ENCODE measurements at regions of chr19 and their contacts with region 1.

Region 1: DNA sequence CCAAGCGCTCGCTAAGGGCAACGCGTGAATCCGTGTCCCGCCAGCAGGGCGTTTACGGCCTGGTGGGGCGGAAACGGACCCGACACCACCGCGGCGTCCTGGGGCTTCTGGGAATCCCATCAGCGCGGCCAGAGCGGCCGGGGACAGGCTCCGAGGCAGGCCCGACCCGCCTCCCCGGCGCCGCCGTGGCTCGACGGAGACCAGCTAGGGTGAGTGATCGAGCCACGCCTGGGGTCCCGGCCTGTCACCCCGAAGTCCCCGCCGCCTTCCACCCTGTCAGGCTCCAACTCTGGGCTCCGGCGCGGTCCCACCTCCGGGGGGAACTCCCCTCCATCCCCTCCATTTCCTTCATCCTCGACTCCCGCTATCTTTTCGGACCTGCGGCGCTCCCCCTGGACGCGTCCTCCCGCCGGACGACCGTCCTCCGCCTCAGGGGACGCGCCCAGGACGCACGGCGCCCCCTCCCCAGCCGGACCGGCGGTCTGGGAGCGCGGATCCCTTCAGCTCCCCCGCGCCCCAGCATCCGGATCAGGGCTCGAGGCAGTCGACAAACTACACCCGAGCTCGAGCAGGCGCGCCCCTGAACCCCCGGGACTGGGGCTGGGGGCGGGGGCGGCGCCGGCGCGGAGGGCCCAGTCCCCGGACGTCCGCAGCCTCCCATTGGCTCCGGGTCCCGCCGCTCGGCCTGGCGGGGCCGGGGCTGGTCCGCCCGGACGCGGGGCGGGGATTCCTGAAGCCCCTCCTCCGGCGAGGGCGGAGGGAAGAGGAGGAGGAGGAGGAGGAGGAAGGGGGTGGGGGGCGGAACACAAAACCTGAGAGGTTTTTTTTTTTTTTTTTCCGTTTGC is 638 bp upstream of the BICRA start:
- DNase-seq: peak; percentile 93 to 98 (median 95)
- ATAC-seq: peak; percentile 87
- H3K4me3 ChIP-seq: peak overlapping the region; percentile 84 to 99
- H3K4me3 Mint-ChIP-seq: peak overlapping the region; percentile 84
- H3K27ac ChIP-seq: peak overlapping the region; percentile 82 to 85
- H3K27ac Mint-ChIP-seq: peak overlapping the region; percentile 77
- H3K4me1 ChIP-seq: peaks cover 17% of the 10 kb centered on the region
- H3K4me1 Mint-ChIP-seq: peaks cover 29% of the 10 kb centered on the region
- H3K27me3 ChIP-seq: no peaks in the 10 kb centered on the region
- H3K27me3 Mint-ChIP-seq: no peaks in the 10 kb centered on the region
- CTCF ChIP-seq: no peak

Region 2: GRCh38 chr19:47483800-47484690 is 124.3 kb before region 1 on chr19 and contains the start of gene KPTN:
- CTCF ChIA-PET with region 1: interaction called, 3 read pairs
- POLR2A ChIA-PET with region 1: interaction called, 3 read pairs
- intact Hi-C with region 1: loop called in 1 of 2 experiments (anchors 1 kb)
- DNase-seq: peak; percentile 76 to 94 (median 87)
- ATAC-seq: peak; percentile 81
- H3K4me3 ChIP-seq: peak within 1 kb of the TSS; percentile 72 to 74
- H3K4me3 Mint-ChIP-seq: peak within 1 kb of the TSS; percentile 98
- H3K27ac ChIP-seq: peak within 1 kb of the TSS; percentile 75 to 94
- H3K27ac Mint-ChIP-seq: peak within 1 kb of the TSS; percentile 98
- H3K4me1 ChIP-seq: peaks cover 38% of the 10 kb centered on the region
- H3K4me1 Mint-ChIP-seq: peaks cover 45% of the 10 kb centered on the region
- H3K27me3 ChIP-seq: no peaks in the 10 kb centered on the region
- H3K27me3 Mint-ChIP-seq: no peaks in the 10 kb centered on the region
- CTCF ChIP-seq: peak; percentile 69
- total RNA-seq, gene KPTN: 5.4 to 5.9 TPM

Region 3: GRCh38 chr19:47573071-47574026 is 34.9 kb before region 1 on chr19 and contains the start of gene ZNF541:
- CTCF ChIA-PET with region 1: no interaction called
- POLR2A ChIA-PET with region 1: interaction called, 4 read pairs
- intact Hi-C with region 1: loop called (anchors 1 to 2 kb)
- DNase-seq: peak; percentile 72 to 94 (median 85)
- ATAC-seq: peak; percentile 89
- H3K4me3 ChIP-seq: peak within 1 kb of the TSS; percentile 60
- H3K4me3 Mint-ChIP-seq: peak within 1 kb of the TSS; percentile 72
- H3K27ac ChIP-seq: peak within 1 kb of the TSS in 1 of 2 experiments; percentile 53
- H3K27ac Mint-ChIP-seq: no peak within 1 kb of the TSS
- H3K4me1 ChIP-seq: peaks cover 32% of the 10 kb centered on the region
- H3K4me1 Mint-ChIP-seq: peaks cover 37% of the 10 kb centered on the region
- H3K27me3 ChIP-seq: no peaks in the 10 kb centered on the region
- H3K27me3 Mint-ChIP-seq: no peaks in the 10 kb centered on the region
- CTCF ChIP-seq: no peak
- total RNA-seq, gene ZNF541: 0.33 to 1.5 TPM

Measured in CD8-positive, alpha-beta T cell (primary cell).